Endothelial cell of umbilical vein (primary cell): ENCODE measurements at regions of chr1 and their contacts with region 1.

Region 1: GRCh38 chr1:229661022-229661877 is 35.2 kb downstream of the URB2 start:
- DNase-seq: peak; percentile 61
- H3K4me3 ChIP-seq: no peak overlapping the region
- H3K27ac ChIP-seq: no peak overlapping the region
- H3K4me1 ChIP-seq: peaks cover 17% of the 10 kb centered on the region
- H3K27me3 ChIP-seq: no peaks in the 10 kb centered on the region
- CTCF ChIP-seq: peak; percentile 82 to 92
- POLR2A ChIP-seq: no peak

Region 2: DNA sequence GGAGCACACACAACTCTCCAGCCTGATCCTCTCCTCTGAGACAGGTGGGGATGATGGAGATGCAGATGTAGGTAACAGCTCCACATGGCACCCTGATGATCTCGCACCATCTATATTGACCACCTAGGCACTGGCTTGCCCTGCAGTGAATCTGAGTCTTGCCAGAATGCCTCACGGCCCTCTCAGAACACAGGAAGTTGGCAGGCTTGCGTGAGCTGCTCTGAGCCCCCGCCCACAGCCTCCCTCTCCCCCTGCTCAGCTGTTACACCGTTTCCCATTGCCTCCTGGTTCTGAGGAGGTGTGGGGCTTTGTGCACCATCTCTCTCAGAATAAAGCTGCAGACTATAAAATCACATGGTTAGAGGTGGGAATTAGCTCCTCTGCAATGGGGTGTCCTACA is 12.8 kb after region 1 on chr1:
- CTCF ChIA-PET with region 1: interaction called, 23 read pairs
- POLR2A ChIA-PET with region 1: no interaction called
- dilution Hi-C with region 1: no loop called
- intact Hi-C with region 1: no loop called
- DNase-seq: no peak
- H3K4me3 ChIP-seq: no peak overlapping the region
- H3K27ac ChIP-seq: no peak overlapping the region
- H3K4me1 ChIP-seq: no peaks in the 10 kb centered on the region
- H3K27me3 ChIP-seq: no peaks in the 10 kb centered on the region
- CTCF ChIP-seq: no peak
- POLR2A ChIP-seq: no peak

Region 3: GRCh38 chr1:229803626-229804217 is 142.5 kb after region 1 on chr1:
- CTCF ChIA-PET with region 1: no interaction called
- POLR2A ChIA-PET with region 1: no interaction called
- dilution Hi-C with region 1: no loop called
- intact Hi-C with region 1: no loop called
- DNase-seq: no peak
- H3K4me3 ChIP-seq: no peak overlapping the region
- H3K27ac ChIP-seq: no peak overlapping the region
- H3K4me1 ChIP-seq: no peaks in the 10 kb centered on the region
- H3K27me3 ChIP-seq: no peaks in the 10 kb centered on the region
- CTCF ChIP-seq: no peak
- POLR2A ChIP-seq: no peak